ENCODE measurements at regions of chr2 and their contacts with region 1.

Region 1: GRCh38 chr2:11753886-11754699 is 7.7 kb downstream of the LPIN1 start:
- DNase-seq: peak; percentile 64
- H3K4me3 Mint-ChIP-seq: peak overlapping the region; percentile 65
- H3K27ac Mint-ChIP-seq: peak overlapping the region; percentile 94
- H3K4me1 Mint-ChIP-seq: peaks cover 91% of the 10 kb centered on the region
- H3K27me3 Mint-ChIP-seq: no peaks in the 10 kb centered on the region

Region 2: GRCh38 chr2:11669454-11670291 is 84.4 kb before region 1 on chr2 and contains the start of gene NTSR2:
- CTCF ChIA-PET with region 1: no interaction called
- POLR2A ChIA-PET with region 1: no interaction called
- DNase-seq: peak; percentile 36
- H3K4me3 Mint-ChIP-seq: no peak within 1 kb of the TSS
- H3K27ac Mint-ChIP-seq: no peak within 1 kb of the TSS
- H3K4me1 Mint-ChIP-seq: peaks cover 9% of the 10 kb centered on the region
- H3K27me3 Mint-ChIP-seq: peaks cover 29% of the 10 kb centered on the region
- total RNA-seq, gene NTSR2: not detected

Region 3: DNA sequence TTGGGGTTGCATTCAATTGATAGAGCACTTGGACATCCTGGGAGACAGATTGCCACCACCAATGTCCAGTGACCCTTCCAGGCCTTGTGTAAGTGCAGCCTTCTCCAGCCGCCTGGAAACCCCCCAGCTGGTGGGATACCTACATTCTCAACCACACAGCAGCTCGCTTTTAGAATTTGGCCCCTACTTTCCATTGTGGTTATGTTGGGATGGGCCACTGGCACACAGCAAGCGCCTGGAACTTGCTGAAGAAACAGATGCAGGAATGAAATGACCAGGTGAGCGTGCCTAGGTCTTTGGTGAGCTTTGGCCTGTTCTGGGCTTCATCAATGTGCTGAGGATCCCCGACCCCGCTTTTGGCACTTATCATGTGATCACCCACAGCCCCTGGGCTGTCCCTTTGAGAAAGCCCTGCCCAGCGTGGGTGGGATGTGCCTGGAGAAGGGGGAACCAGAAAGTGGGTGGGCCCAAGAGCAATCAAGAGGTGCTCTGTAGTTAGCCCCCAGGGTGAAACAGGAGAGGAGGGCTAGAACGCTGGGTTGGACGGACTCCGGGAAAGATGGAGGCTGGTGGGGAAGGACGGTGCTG is 68.1 kb before region 1 on chr2:
- CTCF ChIA-PET with region 1: no interaction called
- POLR2A ChIA-PET with region 1: no interaction called
- DNase-seq: no peak
- H3K4me3 Mint-ChIP-seq: no peak overlapping the region
- H3K27ac Mint-ChIP-seq: no peak overlapping the region
- H3K4me1 Mint-ChIP-seq: peaks cover 24% of the 10 kb centered on the region
- H3K27me3 Mint-ChIP-seq: peaks cover 10% of the 10 kb centered on the region

Region 4: GRCh38 chr2:11743846-11744553 is 10.1 kb before region 1 on chr2:
- CTCF ChIA-PET with region 1: interaction called, 13 read pairs
- POLR2A ChIA-PET with region 1: interaction called, 5 read pairs
- DNase-seq: peak; percentile 65
- H3K4me3 Mint-ChIP-seq: peak overlapping the region; percentile 58
- H3K27ac Mint-ChIP-seq: peak overlapping the region; percentile 86
- H3K4me1 Mint-ChIP-seq: peaks cover 49% of the 10 kb centered on the region
- H3K27me3 Mint-ChIP-seq: no peaks in the 10 kb centered on the region

Region 5: DNA sequence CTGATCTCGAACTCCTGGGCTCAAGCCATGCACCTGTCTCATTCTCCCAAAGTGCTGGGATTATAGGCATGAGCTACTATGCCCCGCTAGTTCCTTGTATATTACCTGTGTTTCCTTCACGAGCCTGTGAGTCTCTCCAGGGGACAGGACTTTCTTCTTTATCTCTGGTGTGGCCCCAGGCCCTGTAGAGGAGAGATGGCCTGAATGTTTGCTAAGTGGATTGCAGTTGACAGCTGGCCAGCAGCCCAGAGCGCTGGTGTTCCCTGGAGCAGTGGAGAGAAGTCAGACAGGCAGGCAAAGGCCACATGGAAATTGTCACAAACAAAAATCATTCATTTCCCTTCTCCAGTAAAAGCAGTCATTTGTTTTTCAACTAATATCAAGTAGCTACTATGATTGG is 10.3 kb after region 1 on chr2:
- CTCF ChIA-PET with region 1: interaction called, 12 read pairs
- POLR2A ChIA-PET with region 1: no interaction called
- DNase-seq: no peak
- H3K4me3 Mint-ChIP-seq: no peak overlapping the region
- H3K27ac Mint-ChIP-seq: no peak overlapping the region
- H3K4me1 Mint-ChIP-seq: peaks cover 39% of the 10 kb centered on the region
- H3K27me3 Mint-ChIP-seq: no peaks in the 10 kb centered on the region

Region 6: GRCh38 chr2:11802782-11803191 is 48.7 kb after region 1 on chr2:
- CTCF ChIA-PET with region 1: no interaction called
- POLR2A ChIA-PET with region 1: no interaction called
- DNase-seq: no peak
- H3K4me3 Mint-ChIP-seq: no peak overlapping the region
- H3K27ac Mint-ChIP-seq: no peak overlapping the region
- H3K4me1 Mint-ChIP-seq: peaks cover 9% of the 10 kb centered on the region
- H3K27me3 Mint-ChIP-seq: no peaks in the 10 kb centered on the region

Region 7: DNA sequence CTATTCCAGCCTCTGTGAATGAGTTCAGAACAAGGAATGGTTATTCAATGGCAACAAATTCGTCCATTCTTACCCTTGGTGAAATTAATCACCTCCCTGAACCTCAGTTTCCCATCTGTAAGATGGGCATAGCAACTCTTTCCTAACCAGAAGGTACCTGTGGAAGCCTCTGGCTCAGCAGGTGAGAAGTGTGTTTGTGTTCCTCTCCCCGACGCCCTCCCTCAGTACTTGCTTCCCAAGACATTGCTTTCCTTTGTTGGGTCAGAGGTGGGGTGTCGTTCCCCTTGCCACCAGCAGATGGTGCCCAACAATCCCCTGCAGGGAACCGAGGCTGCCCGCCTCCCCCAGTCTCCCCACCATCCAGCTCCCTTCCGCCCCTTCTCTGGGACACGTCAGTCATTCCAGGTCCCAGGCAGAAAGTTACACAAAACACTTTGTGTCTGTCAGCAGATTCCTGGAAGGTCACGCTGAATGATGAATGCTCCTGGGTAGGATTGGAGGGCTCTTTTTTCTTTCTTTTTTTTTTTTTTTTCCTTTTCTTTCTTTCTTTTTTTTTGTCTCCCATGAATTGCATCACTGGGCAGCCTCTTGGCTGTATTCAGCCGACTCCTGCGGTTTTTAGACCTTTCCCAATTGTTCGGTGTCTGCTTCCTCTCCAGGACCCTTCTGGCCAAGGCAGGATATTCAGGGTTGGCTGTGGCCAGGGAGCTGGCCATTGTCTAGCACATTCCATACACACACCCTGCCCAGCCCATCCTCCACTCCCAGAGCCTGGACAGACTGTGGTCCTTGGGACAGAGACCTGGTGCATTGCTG is 109.6 kb after region 1 on chr2:
- CTCF ChIA-PET with region 1: no interaction called
- POLR2A ChIA-PET with region 1: no interaction called
- DNase-seq: peak; percentile 66
- H3K4me3 Mint-ChIP-seq: no peak overlapping the region
- H3K27ac Mint-ChIP-seq: no peak overlapping the region
- H3K4me1 Mint-ChIP-seq: peaks cover 20% of the 10 kb centered on the region
- H3K27me3 Mint-ChIP-seq: peaks cover 12% of the 10 kb centered on the region